ENCODE measurements at regions of chr19 and their contacts with region 1.

Region 1: DNA sequence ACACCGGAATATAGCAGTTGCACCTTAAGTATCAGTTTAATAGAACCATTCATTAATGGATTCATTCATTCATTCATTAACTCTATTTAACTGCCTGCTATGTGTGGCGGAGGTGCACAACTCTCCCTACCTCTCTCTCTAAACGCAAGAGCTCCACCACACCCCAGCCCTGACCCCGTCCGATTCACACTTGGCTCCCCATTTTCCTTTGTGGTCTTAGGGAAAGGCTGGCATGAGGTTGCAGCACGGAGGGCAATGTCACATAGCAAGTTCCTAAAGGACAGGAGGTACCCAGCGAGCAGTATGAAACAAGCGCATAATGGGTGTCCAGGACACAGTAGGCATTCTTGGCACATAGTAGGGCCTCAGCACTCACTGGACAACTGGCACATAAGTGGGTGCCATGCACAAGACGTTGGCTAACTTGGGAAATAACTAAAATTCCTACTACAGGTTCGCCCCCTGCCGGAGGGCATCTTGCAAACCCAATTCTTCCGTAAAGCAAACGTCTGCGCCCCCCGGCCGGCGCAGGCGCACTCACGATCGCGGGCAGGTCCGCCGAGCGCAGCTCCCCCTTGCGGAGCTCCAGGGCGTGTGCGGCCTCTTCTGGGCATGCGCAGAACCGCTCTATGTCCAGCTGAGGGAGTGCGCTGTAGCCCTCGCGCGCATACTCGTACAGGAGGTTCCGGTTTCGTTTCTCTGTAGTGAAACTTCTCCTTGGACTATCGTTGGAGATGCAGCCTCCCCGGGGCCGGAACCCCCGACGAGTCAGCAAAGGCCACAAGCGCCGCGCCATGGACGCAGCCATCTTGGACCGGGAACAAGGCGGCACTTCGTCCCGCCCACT is at the start of gene SARS2:
- DNase-seq: peak; percentile 97
- H3K4me3 Mint-ChIP-seq: peak within 1 kb of the TSS; percentile 96
- H3K27ac Mint-ChIP-seq: peak within 1 kb of the TSS; percentile 96
- H3K4me1 Mint-ChIP-seq: peaks cover 25% of the 10 kb centered on the region
- H3K27me3 Mint-ChIP-seq: no peaks in the 10 kb centered on the region
- total RNA-seq, gene SARS2: 41.6 and 42.6 TPM in 2 replicates

Region 2: DNA sequence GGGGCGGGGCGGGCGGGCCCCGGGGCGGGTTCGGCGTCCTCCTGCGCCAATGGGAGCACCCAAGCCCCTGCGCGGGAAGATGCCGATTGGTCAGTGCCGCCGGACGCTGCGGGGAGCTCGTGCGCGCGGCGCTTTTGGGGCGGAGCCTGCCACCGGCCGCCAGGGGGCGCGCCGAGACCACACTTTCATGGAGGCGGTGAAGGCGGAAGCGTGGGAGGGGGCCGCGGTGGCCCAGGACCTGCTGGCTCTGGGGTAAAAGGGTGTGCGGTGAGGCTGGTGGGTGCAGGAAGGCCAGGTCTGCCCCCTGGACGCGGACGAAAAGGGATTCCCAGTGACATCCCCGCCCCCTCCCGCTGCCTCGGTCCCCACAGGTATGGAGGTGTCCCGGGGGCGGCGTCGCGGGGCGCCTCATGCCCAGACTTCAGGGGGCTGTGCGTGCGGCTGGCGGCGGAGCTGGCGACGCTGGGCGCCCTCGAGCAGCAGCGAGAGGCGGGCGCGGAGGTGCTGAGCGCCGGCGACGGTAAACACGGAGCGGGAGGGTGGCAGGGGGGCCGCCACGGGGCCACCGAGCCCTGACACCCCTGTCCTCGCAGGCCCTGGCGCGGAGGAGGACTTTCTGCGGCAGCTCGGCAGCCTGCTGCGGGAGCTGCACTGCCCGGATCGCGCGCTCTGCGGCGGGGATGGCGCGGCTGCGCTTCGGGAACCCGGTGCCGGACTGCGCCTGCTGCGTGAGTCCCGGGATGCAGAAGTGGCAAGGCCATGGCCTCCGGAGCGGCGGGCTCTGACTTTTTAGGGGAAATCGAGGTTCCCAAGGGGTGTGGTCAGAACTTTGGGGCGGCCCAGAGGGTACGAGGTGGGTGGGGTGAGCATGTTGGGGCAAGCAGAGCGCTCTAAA is 526.9 kb before region 1 on chr19 and contains the start of gene FAM98C:
- intact Hi-C with region 1: loop called (anchors 1 kb)
- DNase-seq: peak; percentile 99
- H3K4me3 Mint-ChIP-seq: peak within 1 kb of the TSS; percentile 95
- H3K27ac Mint-ChIP-seq: peak within 1 kb of the TSS; percentile 95
- H3K4me1 Mint-ChIP-seq: peaks cover 12% of the 10 kb centered on the region
- H3K27me3 Mint-ChIP-seq: peaks cover 2% of the 10 kb centered on the region
- total RNA-seq, gene FAM98C: 25.3 and 30.4 TPM in 2 replicates

Region 3: DNA sequence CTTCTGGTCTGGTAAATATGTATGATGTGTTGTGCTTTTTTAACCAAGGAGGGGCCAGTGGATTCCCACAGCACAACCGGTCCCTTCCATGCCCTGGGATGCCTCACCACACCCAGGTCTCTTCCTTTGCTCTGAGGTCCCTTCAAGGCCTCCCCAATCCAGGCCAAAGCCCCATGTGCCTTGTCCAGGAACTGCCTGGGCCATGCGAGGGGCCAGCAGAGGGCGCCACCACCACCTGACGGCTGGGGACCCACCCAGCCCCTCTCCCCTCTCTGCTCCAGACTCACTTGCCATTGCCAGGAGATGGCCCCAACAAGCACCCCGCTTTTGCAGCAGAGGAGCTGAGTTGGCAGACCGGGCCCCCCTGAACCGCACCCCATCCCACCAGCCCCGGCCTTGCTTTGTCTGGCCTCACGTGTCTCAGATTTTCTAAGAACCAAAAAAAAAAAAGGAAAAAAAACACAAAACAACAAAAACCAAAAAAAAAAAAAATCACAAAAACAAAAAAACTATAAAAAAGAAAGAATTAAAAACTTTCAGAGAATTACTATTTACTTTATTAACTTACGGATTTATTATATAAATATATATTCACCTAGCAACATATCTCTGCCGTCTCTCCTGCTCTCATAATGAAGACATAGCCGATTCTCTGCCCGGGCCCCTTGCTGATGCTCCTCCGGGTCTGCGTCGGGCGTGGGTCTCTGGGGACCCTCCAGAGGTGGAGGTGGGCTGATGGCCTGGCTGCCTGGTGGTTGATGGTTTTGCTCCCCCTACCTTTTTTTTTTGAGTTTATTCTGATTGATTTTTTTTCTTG is 200.3 kb before region 1 on chr19:
- intact Hi-C with region 1: loop called (anchors 2 kb)
- DNase-seq: peak; percentile 94
- H3K4me3 Mint-ChIP-seq: no peak overlapping the region
- H3K27ac Mint-ChIP-seq: peak overlapping the region; percentile 63
- H3K4me1 Mint-ChIP-seq: peaks cover 31% of the 10 kb centered on the region
- H3K27me3 Mint-ChIP-seq: no peaks in the 10 kb centered on the region

Region 4: DNA sequence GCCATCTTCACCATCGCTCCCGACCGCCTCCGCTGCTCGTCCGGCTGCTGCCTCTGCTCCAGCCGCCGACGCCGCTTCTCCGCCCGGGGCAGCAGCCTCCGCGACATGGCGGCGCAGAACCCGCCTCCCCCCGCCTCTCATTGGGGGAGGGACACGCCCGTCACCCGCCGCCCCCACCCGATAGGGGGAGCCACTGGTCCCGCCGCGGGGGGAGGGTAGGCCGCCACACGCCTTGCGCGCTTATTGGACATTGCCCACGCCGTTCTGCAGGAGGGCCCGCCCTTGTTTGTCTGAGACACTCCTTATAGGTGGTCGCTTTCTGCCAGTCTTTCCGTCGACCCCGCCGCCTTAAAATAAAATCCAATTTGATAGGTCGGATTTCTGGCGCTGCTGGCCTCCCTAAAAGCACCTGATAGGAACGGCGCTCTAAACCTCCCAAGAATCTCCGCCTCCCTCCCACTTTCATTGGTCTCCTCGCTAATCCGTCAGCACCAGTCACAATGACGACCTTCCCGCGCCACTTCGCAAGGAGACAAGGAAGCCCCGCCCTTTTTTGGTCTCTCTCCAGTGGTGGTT is 80.2 kb before region 1 on chr19 and contains the start of gene HNRNPL:
- intact Hi-C with region 1: loop called (anchors 1 kb)
- DNase-seq: peak; percentile 100
- H3K4me3 Mint-ChIP-seq: peak within 1 kb of the TSS; percentile 98
- H3K27ac Mint-ChIP-seq: peak within 1 kb of the TSS; percentile 100
- H3K4me1 Mint-ChIP-seq: peaks cover 39% of the 10 kb centered on the region
- H3K27me3 Mint-ChIP-seq: no peaks in the 10 kb centered on the region
- total RNA-seq, gene HNRNPL: 686 and 695 TPM in 2 replicates

Region 5: DNA sequence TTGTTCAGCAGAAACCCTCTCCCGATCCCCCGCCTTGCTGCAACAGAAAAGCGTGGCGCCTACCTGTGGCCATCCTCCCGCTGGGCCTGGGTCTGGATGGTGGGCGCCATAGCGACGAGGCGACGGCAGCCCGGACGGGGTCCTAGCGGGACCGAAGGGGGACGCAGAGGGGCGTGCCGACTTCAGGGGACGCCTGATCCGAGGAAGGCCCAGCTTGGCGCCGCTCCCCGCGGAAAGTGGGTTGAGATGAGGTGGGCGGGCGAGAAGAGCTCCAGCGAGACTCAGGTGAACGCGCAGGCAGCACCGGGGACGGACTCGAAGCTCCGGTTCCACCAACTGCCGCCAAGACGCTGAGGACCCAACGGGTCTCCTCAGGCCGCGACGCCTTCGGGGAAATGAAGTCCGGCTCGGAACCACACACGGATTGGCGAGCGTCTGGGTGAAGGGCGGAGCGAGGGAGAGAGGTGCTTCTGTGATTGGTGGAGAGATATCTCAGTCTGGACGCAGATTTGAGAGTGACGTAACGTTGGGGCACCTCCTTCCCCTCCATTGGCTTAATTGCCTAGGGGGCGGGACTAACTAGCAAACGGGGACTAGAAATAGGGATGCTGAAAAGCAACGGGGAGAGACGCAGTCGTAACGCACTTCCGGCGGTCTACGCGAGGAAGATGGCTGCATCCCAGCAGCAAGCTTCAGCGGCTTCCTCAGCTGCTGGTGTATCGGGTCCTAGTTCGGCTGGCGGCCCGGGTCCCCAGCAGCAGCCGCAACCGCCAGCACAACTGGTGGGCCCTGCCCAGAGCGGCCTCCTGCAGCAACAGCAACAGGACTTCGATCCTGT is 460.8 kb after region 1 on chr19 and contains the starts of genes MED29 and PAF1:
- intact Hi-C with region 1: loop called (anchors 1 kb)
- DNase-seq: peak; percentile 99
- H3K4me3 Mint-ChIP-seq: peak within 1 kb of the TSS; percentile 98
- H3K27ac Mint-ChIP-seq: peak within 1 kb of the TSS; percentile 97
- H3K4me1 Mint-ChIP-seq: peaks cover 28% of the 10 kb centered on the region
- H3K27me3 Mint-ChIP-seq: no peaks in the 10 kb centered on the region
- total RNA-seq, gene MED29: 36.0 and 38.7 TPM in 2 replicates
- total RNA-seq, gene PAF1: 47.1 and 50.6 TPM in 2 replicates

Measured in activated CD4-positive, alpha-beta T cell treated with anti-CD3 and anti-CD28 coated beads, Interleukin-2, amount 10 ng/mL, durations not matched to agents 24 days and 14 days (primary cell).